Motor neuron (in vitro differentiated cells): ENCODE measurements at regions of chr15 and their contacts with region 1.

Region 1: GRCh38 chr15:45705510-45706473 is 71.0 kb downstream of the SQOR start:
- ATAC-seq: peak; percentile 74 to 92 (median 79)
- H3K4me3 ChIP-seq: peak overlapping the region; percentile 39 to 67 (median 44)
- H3K27ac ChIP-seq: no peak overlapping the region
- H3K4me1 ChIP-seq: no peaks in the 10 kb centered on the region

Region 2: GRCh38 chr15:45468294-45468693 is 237.5 kb before region 1 on chr15:
- in situ Hi-C with region 1: no loop called
- ATAC-seq: peak in 3 of 8 experiments; percentile 12 to 75 (median 74)
- H3K4me3 ChIP-seq: no peak overlapping the region
- H3K27ac ChIP-seq: no peak overlapping the region
- H3K4me1 ChIP-seq: peaks cover 3 to 6% of the 10 kb centered on the region in 2 donors

Region 3: GRCh38 chr15:46312133-46312740 is 606.4 kb after region 1 on chr15:
- in situ Hi-C with region 1: loop called in 1 of 9 experiments (anchors 25 kb)
- ATAC-seq: peak; percentile 80 to 94 (median 88)
- H3K4me3 ChIP-seq: no peak overlapping the region
- H3K27ac ChIP-seq: no peak overlapping the region
- H3K4me1 ChIP-seq: peaks cover 17 to 28% of the 10 kb centered on the region in 2 donors